HEK293T (cell line): ENCODE measurements at regions of chr17 and their contacts with region 1.

Region 1: DNA sequence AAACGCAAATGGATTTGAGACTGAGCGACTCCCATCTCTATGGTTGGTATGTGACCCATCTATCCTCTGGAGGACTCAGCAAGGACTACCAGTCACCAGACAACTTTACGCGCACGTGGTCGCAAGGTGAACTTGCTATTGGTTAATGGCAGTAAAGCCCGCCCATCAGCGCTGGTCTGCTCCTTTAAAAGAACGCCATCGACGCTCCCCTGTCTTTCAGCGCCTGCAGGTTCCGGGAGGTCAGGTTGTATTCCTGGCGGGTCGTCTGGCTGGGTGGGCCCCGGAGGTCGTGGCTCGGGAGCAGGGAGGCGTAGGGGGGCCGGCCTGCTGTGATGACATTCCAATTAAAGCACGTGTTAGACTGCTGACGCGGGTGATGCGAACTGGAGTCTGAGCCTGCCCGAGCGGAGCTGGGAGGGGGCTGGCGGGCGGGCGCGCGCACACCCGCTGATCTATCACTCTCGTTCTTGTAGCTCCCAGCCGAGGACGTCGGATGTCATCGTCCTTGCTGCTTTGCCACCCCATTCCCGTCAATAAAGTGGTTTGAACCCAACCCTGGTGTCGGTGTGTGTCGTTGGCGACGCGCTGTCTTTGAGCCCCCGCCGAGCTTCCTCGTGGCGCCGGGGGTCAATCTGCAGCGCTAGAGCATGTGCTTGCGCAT is 15.9 kb upstream of the ERN1 start:
- DNase-seq: peak; percentile 95

Region 2: DNA sequence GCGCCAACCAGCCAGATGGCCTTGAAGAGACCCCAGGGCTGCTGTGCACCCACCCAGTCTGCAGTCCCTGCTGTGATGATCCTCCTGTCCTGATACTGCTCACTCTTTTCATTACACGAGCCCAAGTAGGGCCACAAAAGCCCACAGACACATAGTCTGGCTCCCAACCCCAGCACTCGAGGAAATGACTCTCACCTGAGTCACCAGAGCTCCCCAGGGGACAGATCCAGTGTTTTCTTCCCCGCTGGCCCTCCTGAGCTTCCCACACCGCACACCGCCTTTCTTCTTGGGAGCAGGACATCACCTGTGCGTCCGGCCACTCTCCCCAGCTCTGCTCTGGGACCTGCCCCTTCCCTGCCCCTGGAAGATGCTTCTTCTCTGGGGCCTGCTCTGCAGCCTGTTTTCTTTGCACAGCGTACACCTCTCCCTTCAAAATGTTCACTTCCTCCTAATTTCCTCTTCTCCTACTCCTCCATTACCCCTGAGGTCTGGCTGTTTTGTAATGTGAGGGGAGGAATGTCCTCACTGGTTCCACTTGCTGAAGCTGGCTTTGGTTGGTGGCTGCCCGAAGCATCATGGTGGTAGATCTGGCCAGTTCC is 171.2 kb before region 1 on chr17:
- CTCF ChIA-PET with region 1: no interaction called
- POLR2A ChIA-PET with region 1: no interaction called
- DNase-seq: no peak

Region 3: GRCh38 chr17:64103391-64104364 is 42.2 kb before region 1 on chr17:
- CTCF ChIA-PET with region 1: no interaction called
- POLR2A ChIA-PET with region 1: no interaction called
- DNase-seq: no peak

Region 4: DNA sequence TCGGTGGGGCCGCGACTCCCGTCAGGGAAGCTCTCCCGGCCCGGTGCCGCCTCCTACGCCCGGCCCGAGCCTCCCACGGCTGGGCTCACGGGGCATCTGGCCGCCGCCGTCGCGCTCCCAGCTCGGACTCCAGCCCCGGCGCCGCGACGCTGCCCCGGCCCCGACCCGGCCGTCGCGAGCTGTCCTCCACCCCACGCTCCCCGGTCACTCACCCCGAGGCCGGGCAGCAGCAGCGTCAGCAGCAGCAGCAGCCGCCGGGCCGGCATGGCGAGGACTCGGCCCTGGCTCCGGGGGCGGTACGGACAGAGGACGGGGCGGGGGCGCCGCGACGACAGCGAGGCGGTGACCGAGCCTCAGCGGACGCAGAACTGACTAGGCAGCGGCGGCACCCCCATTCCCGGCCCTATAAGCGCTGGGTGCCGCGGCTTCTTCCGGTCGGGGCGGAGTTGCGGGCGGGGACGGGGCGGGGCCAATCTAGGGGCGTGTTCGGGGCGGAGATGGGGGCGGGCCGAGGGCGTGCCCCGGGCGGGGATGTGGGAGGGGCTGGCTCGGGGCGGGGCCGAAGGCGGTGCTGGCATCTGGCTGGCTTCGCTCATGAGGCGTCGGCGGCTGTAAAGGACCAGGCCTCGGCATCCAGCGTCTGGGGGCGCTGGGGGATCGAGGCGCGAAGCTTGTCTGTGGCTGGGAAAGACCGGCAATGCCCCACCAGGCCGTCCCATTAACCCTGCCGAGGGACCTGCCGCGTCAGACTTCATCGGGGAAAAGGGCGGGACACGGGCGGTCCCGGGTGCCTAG is 15.9 kb before region 1 on chr17 and contains the start of gene ERN1:
- CTCF ChIA-PET with region 1: interaction called, 11 read pairs
- POLR2A ChIA-PET with region 1: interaction called, 36 read pairs
- DNase-seq: peak; percentile 96

Region 5: DNA sequence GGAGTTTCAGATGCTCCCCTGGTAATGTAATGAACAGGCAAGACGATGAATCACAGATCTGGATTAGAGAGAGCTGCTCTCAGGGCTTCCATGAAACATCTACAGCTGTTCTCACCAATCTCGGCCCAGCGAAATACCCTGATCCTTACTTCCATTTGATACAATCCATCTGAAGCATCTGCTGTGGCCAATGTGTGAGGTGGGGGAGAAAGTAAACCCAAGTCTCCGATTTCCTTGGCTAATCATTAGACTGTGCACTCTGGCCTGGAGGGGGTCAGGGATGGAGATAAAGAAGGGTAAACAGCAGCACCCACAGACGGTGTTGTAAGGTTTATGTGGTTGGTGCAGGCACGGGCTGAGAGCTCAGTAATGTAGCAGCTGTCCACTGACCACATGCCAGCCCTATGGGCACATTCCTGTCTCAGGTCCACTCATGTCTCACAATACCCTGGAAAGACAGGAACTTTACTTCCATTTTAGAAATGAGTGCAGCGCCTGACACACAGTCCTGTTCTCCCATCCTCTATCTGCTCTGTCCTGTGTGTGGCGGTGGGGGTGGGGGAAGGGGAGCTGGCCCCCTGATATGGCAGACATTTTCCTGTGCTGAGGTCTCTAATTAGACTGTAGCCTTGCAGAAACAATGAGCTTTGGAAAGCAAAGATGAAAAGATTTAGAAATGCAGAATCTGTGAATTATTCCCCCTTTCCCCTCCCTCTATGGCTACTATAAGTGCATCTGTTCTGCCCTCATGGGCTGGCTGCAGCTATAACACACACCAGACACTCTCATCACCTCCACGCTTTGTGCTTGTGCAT is 32.3 kb after region 1 on chr17:
- CTCF ChIA-PET with region 1: no interaction called
- POLR2A ChIA-PET with region 1: interaction called, 13 read pairs
- DNase-seq: no peak

Region 6: DNA sequence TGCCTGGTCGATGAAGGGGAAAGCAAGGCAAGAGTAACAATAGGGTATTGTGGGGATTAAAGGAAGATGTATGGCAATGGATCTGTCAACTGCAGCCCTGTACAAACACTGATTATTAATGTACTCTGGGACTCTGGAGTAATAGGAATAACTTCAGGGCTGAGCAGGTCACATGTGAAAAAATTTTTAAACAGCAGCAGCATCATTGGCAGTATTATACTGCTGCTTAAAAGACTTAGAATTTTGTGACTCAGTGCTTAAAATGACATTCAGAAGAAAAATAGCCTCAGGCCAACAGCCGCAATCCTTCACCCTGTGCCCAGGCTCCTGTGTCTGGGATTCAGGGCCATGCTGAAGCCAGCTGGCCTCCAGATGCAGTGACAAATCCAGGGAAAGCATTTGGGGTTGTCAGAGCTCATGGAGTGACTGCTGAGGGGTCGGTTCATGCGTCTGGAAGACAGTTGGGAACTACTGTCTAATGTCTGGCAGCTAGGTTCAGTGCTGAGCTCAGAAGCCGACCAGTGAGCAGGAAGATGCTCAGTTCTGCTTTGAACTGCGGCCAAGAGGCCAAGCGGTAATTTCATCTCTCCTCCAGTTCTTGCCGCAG is 95.0 kb after region 1 on chr17:
- CTCF ChIA-PET with region 1: no interaction called
- POLR2A ChIA-PET with region 1: interaction called, 13 read pairs
- DNase-seq: no peak

Region 7: GRCh38 chr17:64281962-64282727 is 136.3 kb after region 1 on chr17:
- CTCF ChIA-PET with region 1: interaction called, 3 read pairs
- POLR2A ChIA-PET with region 1: interaction called, 18 read pairs
- DNase-seq: peak; percentile 69